ENCODE measurements at regions of chr7 and their contacts with region 1.

Region 1: GRCh38 chr7:5237286-5237685 is 45.5 kb upstream of the SLC29A4 start:
- DNase-seq: no peak
- H3K4me3 ChIP-seq: no peak overlapping the region
- H3K27ac ChIP-seq: no peak overlapping the region
- H3K4me1 ChIP-seq: peaks cover 19% of the 10 kb centered on the region
- H3K27me3 ChIP-seq: no peaks in the 10 kb centered on the region
- CTCF ChIP-seq: no peak

Region 2: DNA sequence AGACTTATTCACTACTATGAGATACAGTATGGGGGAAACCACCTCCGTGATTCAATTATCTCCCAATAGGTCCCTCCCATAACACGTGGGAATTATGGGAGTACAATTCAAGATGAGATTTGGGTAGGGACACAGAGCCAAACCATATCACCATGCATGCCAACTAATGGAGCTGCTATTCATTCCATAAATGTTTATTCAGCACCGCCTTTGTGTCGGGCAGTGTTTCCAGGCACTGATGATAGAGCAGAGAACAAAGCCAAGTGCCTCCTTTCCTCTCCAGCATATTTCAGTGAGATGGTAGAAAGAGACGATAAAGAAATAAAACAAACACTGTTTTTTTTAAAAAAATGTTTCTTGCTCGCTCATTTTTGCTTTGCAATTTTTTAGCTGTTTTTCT is 851.1 kb before region 1 on chr7:
- CTCF ChIA-PET with region 1: no interaction called
- POLR2A ChIA-PET with region 1: no interaction called
- intact Hi-C with region 1: no loop called
- DNase-seq: no peak
- H3K4me3 ChIP-seq: no peak overlapping the region
- H3K27ac ChIP-seq: no peak overlapping the region
- H3K4me1 ChIP-seq: no peaks in the 10 kb centered on the region
- H3K27me3 ChIP-seq: peaks cover 68% of the 10 kb centered on the region
- CTCF ChIP-seq: no peak

Region 3: DNA sequence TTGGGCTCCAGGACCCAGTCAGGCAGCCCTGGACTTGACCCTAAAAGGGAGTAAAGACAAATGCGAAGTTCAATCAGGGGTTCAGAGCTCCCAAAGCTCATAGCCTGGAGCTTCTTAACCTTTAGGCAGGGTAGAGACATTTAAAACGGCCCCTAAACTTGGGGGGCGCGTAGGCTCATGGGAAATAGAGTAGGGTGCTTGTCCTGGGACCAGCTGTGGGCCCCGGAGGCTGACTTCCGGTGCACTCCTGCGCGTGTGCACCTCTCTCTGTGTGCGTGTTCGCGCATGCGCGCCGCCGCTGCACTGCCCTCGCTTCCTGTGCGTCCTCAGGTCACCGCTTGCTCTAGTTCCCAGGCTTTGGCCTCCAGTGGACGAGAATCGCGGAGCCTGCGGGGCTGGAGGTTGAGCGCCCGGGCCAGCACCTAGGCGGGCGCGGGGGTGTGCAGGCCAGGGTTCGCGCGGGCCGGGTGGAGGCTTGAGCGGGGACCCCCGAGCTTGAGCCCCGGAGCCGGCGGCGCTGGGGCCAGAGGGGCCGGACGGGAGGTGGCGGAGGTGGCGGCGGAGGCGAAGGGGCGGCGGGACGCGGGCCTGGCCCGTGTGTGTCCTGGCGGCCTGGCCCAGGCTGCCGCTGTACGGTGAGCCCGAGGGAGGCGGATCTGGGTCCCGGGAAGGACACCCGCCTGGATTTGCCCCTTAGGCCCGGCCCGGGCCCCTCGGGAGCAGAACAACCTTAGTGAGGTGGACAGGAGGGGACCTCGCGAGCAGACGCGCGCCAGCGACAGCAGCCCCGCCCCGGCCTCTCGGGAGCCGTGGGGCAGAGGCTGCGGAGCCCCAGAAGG is 191.5 kb before region 1 on chr7 and contains the start of gene RBAK:
- CTCF ChIA-PET with region 1: no interaction called
- POLR2A ChIA-PET with region 1: no interaction called
- intact Hi-C with region 1: no loop called
- DNase-seq: peak; percentile 83 to 88
- H3K4me3 ChIP-seq: peak within 1 kb of the TSS; percentile 83
- H3K27ac ChIP-seq: peak within 1 kb of the TSS; percentile 5; the same call in 1 of the 2 replicates
- H3K4me1 ChIP-seq: 0 out of 2 replicates have a peak, but pooled peaks cover 4% of the 10 kb centered on the region
- H3K27me3 ChIP-seq: no peaks in the 10 kb centered on the region
- CTCF ChIP-seq: no peak
- total RNA-seq, gene RBAK: 10.1 and 12.4 TPM in 2 replicates

Region 4: GRCh38 chr7:5284304-5285281 is 47.3 kb after region 1 on chr7:
- CTCF ChIA-PET with region 1: interaction called, 17 read pairs
- POLR2A ChIA-PET with region 1: no interaction called
- intact Hi-C with region 1: loop called (anchors 2 kb)
- DNase-seq: peak; percentile 52 to 66
- H3K4me3 ChIP-seq: no peak overlapping the region
- H3K27ac ChIP-seq: no peak overlapping the region
- H3K4me1 ChIP-seq: peaks cover 6% of the 10 kb centered on the region; the same call in 1 of the 2 replicates
- H3K27me3 ChIP-seq: peaks cover 17% of the 10 kb centered on the region; the same call in 1 of the 2 replicates
- CTCF ChIP-seq: no peak; the same call in 1 of the 2 replicates

Region 5: GRCh38 chr7:5417106-5418071 is 180.1 kb after region 1 on chr7:
- CTCF ChIA-PET with region 1: interaction called, 10 read pairs
- POLR2A ChIA-PET with region 1: no interaction called
- intact Hi-C with region 1: no loop called
- DNase-seq: peak; percentile 39 to 86
- H3K4me3 ChIP-seq: peak overlapping the region; percentile 91; the same call in 1 of the 2 replicates
- H3K27ac ChIP-seq: peak overlapping the region; percentile 89
- H3K4me1 ChIP-seq: peaks cover 26% of the 10 kb centered on the region
- H3K27me3 ChIP-seq: no peaks in the 10 kb centered on the region
- CTCF ChIP-seq: no peak

Region 6: GRCh38 chr7:5488286-5488878 is 251.1 kb after region 1 on chr7:
- CTCF ChIA-PET with region 1: no interaction called
- POLR2A ChIA-PET with region 1: no interaction called
- intact Hi-C with region 1: no loop called
- DNase-seq: no peak
- H3K4me3 ChIP-seq: no peak overlapping the region
- H3K27ac ChIP-seq: no peak overlapping the region
- H3K4me1 ChIP-seq: 0 out of 2 replicates have a peak, but pooled peaks cover 5% of the 10 kb centered on the region
- H3K27me3 ChIP-seq: no peaks in the 10 kb centered on the region
- CTCF ChIP-seq: no peak

Region 7: DNA sequence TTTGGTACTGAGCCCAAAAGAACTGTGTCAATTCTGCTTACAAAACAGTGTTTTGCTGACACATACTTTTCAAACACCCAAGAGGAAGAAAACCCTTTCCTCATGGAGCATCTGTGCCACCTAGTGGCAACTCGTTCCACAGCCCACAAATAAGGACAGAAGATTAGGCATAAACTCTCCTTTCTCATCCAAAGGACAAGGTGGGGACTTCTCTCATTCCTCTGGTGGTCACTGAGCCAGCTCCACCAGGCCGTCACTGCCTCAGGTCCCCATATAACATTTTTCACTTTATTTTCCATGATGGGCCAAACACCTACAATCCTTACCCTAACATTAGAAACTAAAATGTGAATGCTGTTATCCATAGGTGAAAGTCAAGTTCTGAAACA is 467.2 kb after region 1 on chr7:
- CTCF ChIA-PET with region 1: interaction called, 6 read pairs
- POLR2A ChIA-PET with region 1: no interaction called
- intact Hi-C with region 1: loop called (anchors 2 kb)
- DNase-seq: peak; percentile 66 to 76
- H3K4me3 ChIP-seq: no peak overlapping the region
- H3K27ac ChIP-seq: no peak overlapping the region
- H3K4me1 ChIP-seq: peaks cover 8% of the 10 kb centered on the region
- H3K27me3 ChIP-seq: no peaks in the 10 kb centered on the region
- CTCF ChIP-seq: peak; percentile 95

Measured in PC-9 (cell line).